ENCODE measurements at regions of chr3 and their contacts with region 1.

Region 1: DNA sequence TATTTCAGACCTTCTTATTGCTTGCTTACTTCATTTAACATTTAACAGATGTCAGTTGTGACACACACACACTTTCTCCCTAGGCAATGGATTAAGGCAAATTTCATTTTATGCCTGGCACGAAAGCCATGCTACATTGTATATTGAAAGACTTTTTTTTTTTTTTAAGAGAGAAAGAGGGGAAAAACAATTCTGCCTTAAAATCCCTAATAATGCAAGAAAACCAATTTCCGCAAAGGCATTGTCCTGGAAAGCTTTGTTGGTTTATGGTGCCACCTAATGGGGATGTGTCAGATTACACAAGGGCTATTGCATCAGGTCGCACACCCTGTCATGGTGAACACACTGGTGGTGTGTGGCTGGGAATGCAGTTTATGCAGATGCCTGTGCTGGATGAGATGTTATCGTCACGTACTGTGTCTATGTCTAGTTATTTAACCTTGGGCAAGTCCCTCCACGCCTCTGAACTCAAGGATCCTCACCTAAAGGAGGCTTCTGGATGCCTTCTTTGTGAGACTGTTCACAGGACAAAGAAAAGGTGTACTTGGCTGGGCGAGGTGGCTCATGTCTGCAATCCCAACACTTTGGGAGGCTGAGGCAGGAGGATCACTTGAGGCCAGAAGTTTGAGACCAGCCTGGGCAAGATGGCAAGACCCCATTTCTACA is 37.3 kb upstream of the RFTN1 start:
- DNase-seq: peak; percentile 86

Region 2: DNA sequence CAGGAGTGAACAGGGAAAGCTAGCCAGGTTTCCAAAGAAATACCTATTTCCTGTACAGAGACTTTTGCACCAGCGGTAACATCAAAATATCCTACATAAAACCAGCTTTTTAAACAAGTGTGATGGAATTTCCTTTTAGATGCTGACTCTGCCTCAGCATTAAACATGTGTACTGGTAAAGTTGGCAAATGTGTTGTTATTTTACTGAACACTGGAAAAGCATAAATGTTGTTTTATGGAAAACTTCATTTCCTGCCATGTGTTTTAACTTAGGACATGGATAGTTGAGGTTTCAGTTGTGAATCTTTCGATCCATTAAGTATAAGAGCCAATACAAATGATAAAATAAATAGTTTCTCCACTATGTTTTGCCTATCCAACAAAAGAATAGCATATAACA is 270.1 kb before region 1 on chr3:
- intact Hi-C with region 1: loop called (anchors 5 kb)
- DNase-seq: no peak

Region 3: DNA sequence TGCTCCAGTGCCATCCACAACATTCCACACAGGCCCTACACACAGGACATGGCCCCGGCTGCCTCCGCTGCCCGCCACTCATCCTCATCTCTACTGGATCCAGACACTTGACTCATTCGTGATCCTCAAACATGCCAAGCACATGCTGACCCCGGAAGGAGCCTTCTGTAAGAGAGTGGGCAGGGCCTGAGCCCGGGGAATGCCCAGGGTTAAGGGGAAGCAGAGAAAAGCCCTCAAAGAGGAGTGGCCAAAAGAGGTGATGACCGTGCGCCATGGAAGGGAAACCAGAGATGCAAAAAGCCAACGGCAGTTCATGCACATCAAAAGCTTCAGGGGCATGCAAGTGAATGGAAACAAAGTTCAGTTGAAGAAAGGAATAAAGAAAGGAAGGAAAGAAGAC is 83.4 kb before region 1 on chr3:
- intact Hi-C with region 1: no loop called
- DNase-seq: no peak

Region 4: GRCh38 chr3:16529264-16529663 is 21.5 kb before region 1 on chr3:
- intact Hi-C with region 1: loop called in 1 of 2 experiments (anchors 2 kb)
- DNase-seq: no peak

Measured in posterior vena cava (tissue), 2 donors.